ENCODE measurements at regions of chr6 and their contacts with region 1.

Region 1: DNA sequence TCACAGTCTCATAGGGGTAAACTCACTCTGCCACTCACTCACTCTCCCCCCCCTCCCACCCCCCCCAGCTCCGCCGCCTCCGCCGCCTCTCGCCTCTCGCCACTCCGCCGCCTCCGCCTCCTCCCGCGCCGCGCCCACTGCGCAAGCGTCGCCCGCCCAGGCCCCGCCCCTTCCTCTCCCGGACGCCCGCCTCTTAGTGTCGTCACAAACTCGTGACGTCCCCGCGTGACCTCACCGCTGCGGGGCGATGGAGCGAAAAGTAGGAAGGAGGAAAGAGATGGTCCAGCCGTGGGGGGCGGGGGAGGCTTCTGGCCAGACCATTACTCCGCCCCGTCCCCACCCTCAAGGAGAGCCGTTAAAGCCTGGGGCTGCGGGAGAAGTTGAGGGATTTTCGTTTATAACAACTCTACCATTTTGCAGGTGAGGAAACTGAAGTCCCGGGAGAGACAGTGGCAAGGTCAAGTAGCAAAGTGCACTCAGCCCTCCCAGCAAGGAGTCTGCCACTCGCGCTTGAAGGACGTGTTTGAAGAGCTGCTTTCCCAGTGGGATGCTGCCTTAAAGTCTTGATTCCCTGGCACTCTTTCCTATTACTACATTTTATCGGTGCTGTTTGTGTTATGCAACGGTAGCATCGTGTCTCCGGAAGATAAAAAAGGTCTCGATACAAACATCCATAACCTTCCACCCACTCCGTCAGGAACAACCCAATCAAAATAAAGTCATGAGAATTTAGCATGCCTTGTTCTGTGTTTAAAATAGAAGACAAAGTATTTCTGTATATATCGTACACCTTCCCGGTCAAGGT is at the start of gene ILRUN:
- DNase-seq: peak; percentile 96 to 98
- ATAC-seq: peak; percentile 94 to 96 (median 94)
- H3K4me3 ChIP-seq: peak within 1 kb of the TSS; percentile 99
- H3K27ac ChIP-seq: peak within 1 kb of the TSS; percentile 96
- H3K4me1 ChIP-seq: peaks cover 31% of the 10 kb centered on the region
- H3K27me3 ChIP-seq: no peaks in the 10 kb centered on the region
- CTCF ChIP-seq: no peak
- total RNA-seq, gene ILRUN: 129 to 191 (median 176) TPM

Region 2: GRCh38 chr6:34526992-34527728 is 169.8 kb before region 1 on chr6:
- intact Hi-C with region 1: loop called in 1 of 2 experiments (anchors 5 kb)
- DNase-seq: peak; percentile 96 to 98
- ATAC-seq: peak; percentile 92 to 95 (median 94)
- H3K4me3 ChIP-seq: peak overlapping the region; percentile 47
- H3K27ac ChIP-seq: peak overlapping the region; percentile 36
- H3K4me1 ChIP-seq: peaks cover 8% of the 10 kb centered on the region
- H3K27me3 ChIP-seq: no peaks in the 10 kb centered on the region
- CTCF ChIP-seq: peak; percentile 70

Region 3: DNA sequence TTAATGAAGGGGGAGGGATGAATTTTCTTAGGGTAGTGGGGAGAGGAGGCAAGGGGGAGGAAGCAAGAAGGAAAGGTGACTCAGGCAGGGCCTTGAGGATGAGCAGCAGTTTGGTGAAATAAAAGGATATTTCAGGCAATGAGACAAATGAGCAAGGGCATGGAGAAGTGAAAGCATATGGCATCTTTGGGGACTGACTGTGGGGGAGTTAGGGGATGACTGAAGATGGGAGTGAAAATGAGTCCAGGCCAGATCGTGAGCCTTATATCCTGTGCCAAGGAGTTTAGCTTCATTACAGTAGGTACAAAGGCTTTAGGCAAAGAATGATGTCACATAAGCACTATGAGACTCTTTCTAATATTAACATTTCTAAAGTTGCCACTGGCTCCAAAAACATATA is 52.2 kb before region 1 on chr6:
- intact Hi-C with region 1: loop called in 1 of 2 experiments (anchors 10 kb)
- DNase-seq: no peak
- ATAC-seq: no peak
- H3K4me3 ChIP-seq: no peak overlapping the region
- H3K27ac ChIP-seq: peak overlapping the region; percentile 53
- H3K4me1 ChIP-seq: peaks cover 40% of the 10 kb centered on the region
- H3K27me3 ChIP-seq: no peaks in the 10 kb centered on the region
- CTCF ChIP-seq: no peak

Region 4: GRCh38 chr6:34656378-34657036 is 40.4 kb before region 1 on chr6:
- intact Hi-C with region 1: loop called (anchors 5 kb)
- DNase-seq: no peak
- ATAC-seq: peak; percentile 77 to 83 (median 81)
- H3K4me3 ChIP-seq: peak overlapping the region; percentile 61
- H3K27ac ChIP-seq: peak overlapping the region; percentile 95
- H3K4me1 ChIP-seq: peaks cover 52% of the 10 kb centered on the region
- H3K27me3 ChIP-seq: no peaks in the 10 kb centered on the region
- CTCF ChIP-seq: no peak

Region 5: GRCh38 chr6:34664256-34664971 is 32.5 kb before region 1 on chr6:
- intact Hi-C with region 1: loop called (anchors 5 kb)
- DNase-seq: no peak
- ATAC-seq: peak in 2 of 4 donors; percentile 34 to 42
- H3K4me3 ChIP-seq: no peak overlapping the region
- H3K27ac ChIP-seq: peak overlapping the region; percentile 71
- H3K4me1 ChIP-seq: peaks cover 27% of the 10 kb centered on the region
- H3K27me3 ChIP-seq: no peaks in the 10 kb centered on the region
- CTCF ChIP-seq: no peak

Region 6: DNA sequence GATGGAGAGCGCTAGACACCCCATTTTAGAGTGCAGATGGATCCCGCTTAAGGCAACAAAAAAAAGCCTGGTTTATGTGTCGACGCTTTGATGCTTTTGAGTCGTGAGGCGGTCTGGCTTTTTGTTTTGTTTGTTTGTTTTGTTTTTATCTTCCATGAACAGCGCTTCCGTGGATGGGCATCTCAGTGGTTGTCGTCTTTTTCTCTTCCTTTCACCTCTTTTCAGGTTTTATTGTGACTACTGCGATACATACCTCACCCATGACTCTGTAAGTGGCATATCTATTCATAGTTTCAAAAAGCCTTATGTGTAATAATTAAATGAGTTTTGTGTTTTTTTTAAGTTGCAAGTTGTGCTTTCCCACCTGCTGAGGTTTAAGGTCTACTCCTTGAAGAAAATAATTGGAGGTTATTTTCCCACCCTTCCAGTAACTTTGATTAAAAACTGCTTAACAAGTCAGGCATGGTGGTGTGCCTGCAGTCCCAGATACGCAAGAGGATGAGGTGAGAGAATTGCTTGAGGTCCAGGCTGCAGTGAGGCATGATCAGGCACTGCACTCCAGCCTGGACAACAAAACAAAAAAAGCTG is 60.8 kb after region 1 on chr6:
- intact Hi-C with region 1: loop called (anchors 2 to 5 kb)
- DNase-seq: no peak
- ATAC-seq: no peak
- H3K4me3 ChIP-seq: peak overlapping the region; percentile 76
- H3K27ac ChIP-seq: peak overlapping the region; percentile 96
- H3K4me1 ChIP-seq: peaks cover 10% of the 10 kb centered on the region
- H3K27me3 ChIP-seq: no peaks in the 10 kb centered on the region
- CTCF ChIP-seq: no peak

Region 7: GRCh38 chr6:34986845-34987246 is 289.9 kb after region 1 on chr6:
- intact Hi-C with region 1: no loop called
- DNase-seq: peak; percentile 64 to 73
- ATAC-seq: peak; percentile 84 to 95 (median 87)
- H3K4me3 ChIP-seq: no peak overlapping the region
- H3K27ac ChIP-seq: no peak overlapping the region
- H3K4me1 ChIP-seq: peaks cover 7% of the 10 kb centered on the region
- H3K27me3 ChIP-seq: no peaks in the 10 kb centered on the region
- CTCF ChIP-seq: peak; percentile 92

Region 8: DNA sequence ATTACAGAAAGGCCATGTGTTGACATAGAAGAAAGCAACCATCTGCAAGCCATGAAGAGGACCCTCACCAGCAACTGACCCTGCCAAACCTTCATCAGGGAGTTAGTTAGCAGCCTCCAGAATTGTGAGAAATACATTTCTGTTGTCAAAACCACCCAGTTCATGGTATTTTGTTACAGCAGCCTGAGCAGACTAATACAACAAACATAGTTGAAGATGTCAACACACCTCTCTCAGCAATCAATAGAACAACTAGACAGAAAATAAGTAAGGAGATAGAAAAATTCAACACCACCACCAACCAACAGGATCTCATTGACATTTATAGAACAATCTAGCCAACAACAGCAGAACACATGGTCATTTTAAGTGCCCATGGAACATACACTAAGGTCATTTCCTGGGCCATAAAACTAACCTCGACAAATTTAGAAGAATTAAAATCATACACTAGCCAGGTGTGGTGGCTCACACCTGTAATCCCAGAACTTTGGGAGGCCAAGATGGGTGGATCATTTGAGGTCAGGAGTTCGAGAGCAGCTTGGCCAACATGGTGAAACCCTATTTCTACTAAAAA is 411.5 kb after region 1 on chr6:
- intact Hi-C with region 1: no loop called
- DNase-seq: no peak
- ATAC-seq: no peak
- H3K4me3 ChIP-seq: no peak overlapping the region
- H3K27ac ChIP-seq: no peak overlapping the region
- H3K4me1 ChIP-seq: no peaks in the 10 kb centered on the region
- H3K27me3 ChIP-seq: no peaks in the 10 kb centered on the region
- CTCF ChIP-seq: no peak

Region 9: DNA sequence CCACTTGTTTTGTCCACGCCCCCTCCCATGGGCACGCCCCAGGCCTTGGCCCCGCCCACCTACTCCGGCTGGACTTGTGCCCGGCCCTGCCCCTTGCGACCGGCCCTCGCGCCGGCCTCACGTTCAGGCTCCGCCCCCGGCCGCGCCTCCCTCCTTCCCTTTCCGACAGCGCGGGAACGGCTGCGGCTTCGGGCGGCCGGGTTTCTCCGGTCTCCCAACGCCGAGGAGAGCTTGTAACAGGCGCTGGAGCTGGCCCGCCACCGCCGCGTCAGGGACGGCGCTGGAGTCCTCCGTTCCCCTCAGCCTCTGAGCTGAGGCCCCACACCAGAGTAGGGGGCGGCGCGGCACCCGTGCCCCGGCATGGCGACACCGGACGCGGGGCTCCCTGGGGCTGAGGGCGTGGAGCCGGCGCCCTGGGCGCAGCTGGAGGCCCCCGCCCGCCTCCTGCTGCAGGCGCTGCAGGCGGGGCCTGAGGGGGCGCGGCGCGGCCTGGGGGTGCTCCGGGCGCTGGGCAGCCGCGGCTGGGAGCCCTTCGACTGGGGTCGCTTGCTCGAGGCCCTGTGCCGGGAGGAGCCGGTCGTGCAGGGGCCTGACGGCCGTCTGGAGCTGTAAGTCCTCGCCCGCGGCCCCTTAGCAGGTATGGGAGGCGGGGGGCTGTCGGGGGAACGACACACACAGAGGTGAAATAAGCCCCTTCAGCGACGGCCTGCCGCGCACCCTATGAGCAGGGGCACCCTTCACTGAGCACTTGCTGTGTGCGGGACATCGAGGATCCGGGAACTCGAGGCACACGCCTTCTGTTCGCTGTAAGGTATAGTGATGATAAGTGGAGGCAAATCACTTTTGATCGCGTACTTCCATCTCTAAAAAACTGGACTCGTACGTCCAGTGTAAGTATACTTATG is 755.5 kb after region 1 on chr6 and contains the start of gene FANCE:
- intact Hi-C with region 1: loop called in 1 of 2 experiments (anchors 10 kb)
- DNase-seq: peak; percentile 95 to 97
- ATAC-seq: peak; percentile 89 to 94 (median 92)
- H3K4me3 ChIP-seq: peak within 1 kb of the TSS; percentile 78
- H3K27ac ChIP-seq: peak within 1 kb of the TSS; percentile 81
- H3K4me1 ChIP-seq: peaks cover 29% of the 10 kb centered on the region
- H3K27me3 ChIP-seq: no peaks in the 10 kb centered on the region
- CTCF ChIP-seq: no peak
- total RNA-seq, gene FANCE: 5.7 to 9.3 (median 8.1) TPM

Region 10: GRCh38 chr6:35601331-35602132 is 904.6 kb after region 1 on chr6:
- intact Hi-C with region 1: no loop called
- DNase-seq: peak; percentile 46 to 73
- ATAC-seq: peak; percentile 63 to 82 (median 76)
- H3K4me3 ChIP-seq: peak overlapping the region; percentile 53
- H3K27ac ChIP-seq: peak overlapping the region; percentile 95
- H3K4me1 ChIP-seq: peaks cover 84% of the 10 kb centered on the region
- H3K27me3 ChIP-seq: no peaks in the 10 kb centered on the region
- CTCF ChIP-seq: no peak

Measured in psoas muscle (tissue), 8 donors.